Right lobe of liver (tissue), 6 donors: ENCODE measurements at regions of chr19 and their contacts with region 1.

Region 1: GRCh38 chr19:17052439-17053210 is 22.6 kb downstream of the HAUS8 start:
- DNase-seq: no peak
- ATAC-seq: peak; percentile 55 to 67 (median 63)
- H3K4me3 ChIP-seq: no peak overlapping the region
- H3K27ac ChIP-seq: no peak overlapping the region
- H3K4me1 ChIP-seq: no peaks in the 10 kb centered on the region
- H3K27me3 ChIP-seq: no peaks in the 10 kb centered on the region
- CTCF ChIP-seq: peak; percentile 40 to 55 (median 48)
- POLR2A ChIP-seq: no peak

Region 2: DNA sequence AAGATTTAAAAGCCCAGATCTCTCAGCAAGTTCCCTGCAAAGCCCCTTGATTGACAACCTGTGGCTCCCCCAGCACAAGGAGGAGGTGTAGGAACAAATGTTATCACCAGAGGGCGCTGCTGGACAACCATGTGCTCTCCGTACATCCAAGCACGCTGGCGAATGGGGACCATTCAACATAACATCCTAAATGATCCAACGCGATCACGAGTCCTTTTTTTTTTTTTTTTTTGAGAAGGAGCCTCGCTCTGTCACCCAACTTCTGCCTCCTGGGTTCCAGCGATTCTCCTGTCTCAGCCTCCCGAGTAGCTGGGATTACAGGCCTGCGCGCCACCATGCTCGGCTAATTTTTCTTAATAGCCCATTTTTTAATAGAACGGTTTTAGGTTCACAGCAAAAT is 281.0 kb before region 1 on chr19:
- intact Hi-C with region 1: loop called (anchors 5 to 10 kb)
- DNase-seq: peak in 2 of 3 donors; percentile 51 to 70
- ATAC-seq: peak; percentile 85 to 89 (median 88)
- H3K4me3 ChIP-seq: no peak overlapping the region
- H3K27ac ChIP-seq: no peak overlapping the region
- H3K4me1 ChIP-seq: no peaks in the 10 kb centered on the region
- H3K27me3 ChIP-seq: no peaks in the 10 kb centered on the region
- CTCF ChIP-seq: peak; percentile 75 to 88 (median 84)
- POLR2A ChIP-seq: no peak

Region 3: DNA sequence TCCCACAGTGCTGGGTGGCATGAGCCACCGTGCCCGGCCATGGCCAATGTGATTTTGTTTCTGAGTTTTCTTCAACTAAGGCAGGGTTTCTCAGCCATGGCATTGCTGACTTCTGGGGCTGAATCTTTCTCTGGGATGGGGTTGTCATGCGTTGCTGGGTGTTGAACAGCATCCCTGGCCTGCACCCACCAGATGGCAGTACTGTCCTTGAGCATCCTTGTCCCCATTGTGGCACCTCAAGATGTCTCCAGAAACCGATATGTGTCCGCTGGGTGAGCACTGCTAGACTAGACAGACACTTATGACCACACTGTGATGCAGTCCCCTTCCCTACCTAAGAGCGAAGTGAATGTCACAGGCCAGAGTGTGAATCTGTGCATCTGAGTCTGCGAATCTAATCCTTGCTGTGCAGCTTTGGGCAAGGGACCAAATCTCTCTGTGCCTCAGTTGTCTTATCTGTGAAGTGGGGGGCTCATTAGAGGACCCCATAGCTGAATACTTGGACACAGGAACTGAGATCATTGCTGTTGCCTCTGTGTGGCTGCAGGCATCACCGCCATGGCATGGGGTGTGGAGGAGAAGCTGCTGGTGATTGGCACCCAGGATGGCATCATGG is 273.7 kb before region 1 on chr19:
- intact Hi-C with region 1: loop called (anchors 5 to 10 kb)
- DNase-seq: peak in 2 of 3 donors; percentile 39 to 52
- ATAC-seq: peak; percentile 62 to 76 (median 66)
- H3K4me3 ChIP-seq: no peak overlapping the region
- H3K27ac ChIP-seq: no peak overlapping the region
- H3K4me1 ChIP-seq: no peaks in the 10 kb centered on the region
- H3K27me3 ChIP-seq: no peaks in the 10 kb centered on the region
- CTCF ChIP-seq: peak; percentile 36 to 46 (median 39)
- POLR2A ChIP-seq: no peak